ENCODE measurements at regions of chr9 and their contacts with region 1.

Region 1: GRCh38 chr9:2991292-2991691 is 147.4 kb upstream of the PUM3 start:
- DNase-seq: peak; percentile 1
- ATAC-seq: no peak
- H3K4me3 ChIP-seq: no peak overlapping the region
- H3K27ac ChIP-seq: no peak overlapping the region
- H3K4me1 ChIP-seq: no peaks in the 10 kb centered on the region
- H3K27me3 ChIP-seq: no peaks in the 10 kb centered on the region; a peak in 1 of 5 replicates
- CTCF ChIP-seq: no peak
- EP300 ChIP-seq: no peak
- POLR2A ChIP-seq: no peak
- RAD21 ChIP-seq: no peak

Region 2: GRCh38 chr9:1722404-1722803 is 1268.9 kb before region 1 on chr9:
- CTCF ChIA-PET with region 1: no interaction called
- POLR2A ChIA-PET with region 1: no interaction called
- in situ Hi-C with region 1: no loop called
- intact Hi-C with region 1: no loop called
- DNase-seq: no peak
- ATAC-seq: peak; percentile 46; the same call in 2 of the 3 replicates
- H3K4me3 ChIP-seq: no peak overlapping the region
- H3K27ac ChIP-seq: no peak overlapping the region
- H3K4me1 ChIP-seq: no peaks in the 10 kb centered on the region
- H3K27me3 ChIP-seq: no peaks in the 10 kb centered on the region
- CTCF ChIP-seq: no peak
- EP300 ChIP-seq: no peak
- POLR2A ChIP-seq: no peak
- RAD21 ChIP-seq: no peak

Region 3: GRCh38 chr9:2857564-2858198 is 133.6 kb before region 1 on chr9:
- CTCF ChIA-PET with region 1: no interaction called
- POLR2A ChIA-PET with region 1: no interaction called
- in situ Hi-C with region 1: no loop called
- intact Hi-C with region 1: loop called (anchors 5 kb)
- DNase-seq: peak; percentile 47
- ATAC-seq: peak; percentile 93
- H3K4me3 ChIP-seq: no peak overlapping the region
- H3K27ac ChIP-seq: no peak overlapping the region
- H3K4me1 ChIP-seq: no peaks in the 10 kb centered on the region
- H3K27me3 ChIP-seq: no peaks in the 10 kb centered on the region; a peak in 1 of 5 replicates
- CTCF ChIP-seq: peak; percentile 83
- EP300 ChIP-seq: no peak
- POLR2A ChIP-seq: no peak
- RAD21 ChIP-seq: peak; percentile 50; the same call in 1 of the 2 replicates

Region 4: DNA sequence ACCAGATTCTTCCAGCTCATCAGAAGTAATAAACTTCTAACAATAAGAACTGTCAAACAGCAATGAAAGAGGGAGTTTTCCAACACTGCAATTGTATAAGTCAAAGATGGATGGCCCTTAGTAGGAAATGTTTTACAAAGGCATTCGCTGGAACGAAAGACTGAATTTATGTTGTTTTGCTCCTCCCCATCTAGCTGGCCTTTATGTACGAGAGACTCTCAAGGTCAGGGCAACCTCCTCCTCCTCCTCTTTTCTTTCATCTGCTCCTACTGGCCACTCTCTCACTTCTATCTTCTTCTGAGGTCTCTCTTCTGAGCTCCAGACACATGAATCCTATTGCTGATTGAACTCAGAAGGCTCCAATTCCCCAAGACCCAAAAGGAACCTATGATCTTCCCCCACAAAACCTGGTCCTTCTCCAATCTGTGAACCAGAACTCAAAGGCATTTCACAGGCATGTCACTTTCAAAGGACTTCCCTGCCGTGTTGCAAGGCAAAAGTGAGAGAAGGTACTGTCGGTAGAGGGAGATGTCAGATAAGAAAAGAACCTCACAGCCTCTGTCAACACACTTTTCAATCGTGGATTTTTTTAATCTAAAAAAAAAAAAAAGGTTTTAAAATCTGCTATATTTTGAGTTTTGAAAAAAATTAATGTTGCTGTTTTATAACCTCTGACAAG is 118.9 kb before region 1 on chr9:
- CTCF ChIA-PET with region 1: no interaction called
- POLR2A ChIA-PET with region 1: no interaction called
- in situ Hi-C with region 1: no loop called
- intact Hi-C with region 1: loop called (anchors 5 kb)
- DNase-seq: peak; percentile 49
- ATAC-seq: peak; percentile 91
- H3K4me3 ChIP-seq: peak overlapping the region in 1 of 3 experiments; percentile 8; a peak in 2 of 6 replicates
- H3K27ac ChIP-seq: no peak overlapping the region
- H3K4me1 ChIP-seq: peaks cover 18% of the 10 kb centered on the region
- H3K27me3 ChIP-seq: peaks cover 2 to 10% of the 10 kb centered on the region in 2 experiments; a peak in 2 of 5 replicates
- CTCF ChIP-seq: peak; percentile 72
- EP300 ChIP-seq: no peak
- POLR2A ChIP-seq: no peak
- RAD21 ChIP-seq: no peak

Region 5: DNA sequence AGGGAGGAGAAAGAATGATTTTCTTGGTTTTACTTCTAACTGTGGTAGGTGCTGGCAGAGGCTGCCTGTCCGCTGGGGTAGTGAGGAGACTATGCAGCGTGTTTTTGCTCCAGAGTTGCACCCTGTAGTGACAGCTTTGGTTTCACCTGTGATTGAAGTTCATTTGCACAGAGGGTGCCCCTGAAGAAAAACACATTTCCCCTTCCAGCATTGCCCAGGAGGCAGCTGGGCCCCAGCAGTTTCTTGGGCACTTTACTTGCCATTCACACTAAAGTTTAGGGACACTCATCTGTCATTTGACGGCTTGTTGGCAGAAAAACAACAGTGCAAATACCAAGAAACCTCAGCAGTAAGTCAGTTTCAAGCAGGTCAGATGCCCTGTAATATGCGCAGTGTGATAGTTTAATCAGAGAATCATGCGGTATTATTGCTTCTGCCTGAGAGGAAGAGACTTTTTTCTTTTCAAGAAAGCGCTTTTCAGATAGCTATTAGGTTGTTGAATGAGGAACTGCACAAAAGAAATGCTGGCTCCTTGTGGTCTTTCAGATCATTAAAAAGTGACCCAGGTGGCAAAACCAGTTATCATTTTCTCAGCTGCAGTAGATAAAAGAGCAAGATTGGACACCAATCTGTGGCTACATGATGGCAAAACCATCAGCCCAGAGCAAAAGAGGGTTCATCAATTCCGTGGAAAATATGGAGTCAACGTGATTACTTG is 11.2 kb before region 1 on chr9:
- CTCF ChIA-PET with region 1: no interaction called
- POLR2A ChIA-PET with region 1: no interaction called
- in situ Hi-C with region 1: no loop called
- intact Hi-C with region 1: no loop called
- DNase-seq: no peak
- ATAC-seq: no peak
- H3K4me3 ChIP-seq: no peak overlapping the region
- H3K27ac ChIP-seq: no peak overlapping the region
- H3K4me1 ChIP-seq: no peaks in the 10 kb centered on the region
- H3K27me3 ChIP-seq: no peaks in the 10 kb centered on the region
- CTCF ChIP-seq: no peak
- EP300 ChIP-seq: no peak
- POLR2A ChIP-seq: no peak
- RAD21 ChIP-seq: no peak

Measured in HepG2 (cell line).